Activated CD8-positive, alpha-beta T cell treated with anti-CD3 and anti-CD28 coated beads for 36 hours (primary cell): ENCODE measurements at regions of chr1 and their contacts with region 1.

Region 1: GRCh38 chr1:159071970-159072582 is 4.5 kb downstream of the AIM2 start:
- DNase-seq: no peak
- ATAC-seq: no peak
- H3K4me3 Mint-ChIP-seq: no peak overlapping the region
- H3K27ac Mint-ChIP-seq: no peak overlapping the region
- H3K4me1 Mint-ChIP-seq: peaks cover 28% of the 10 kb centered on the region
- H3K27me3 Mint-ChIP-seq: no peaks in the 10 kb centered on the region
- CTCF ChIP-seq: peak; percentile 89

Region 2: GRCh38 chr1:158793604-158794003 is 278.5 kb before region 1 on chr1:
- CTCF ChIA-PET with region 1: interaction called, 5 read pairs
- POLR2A ChIA-PET with region 1: no interaction called
- intact Hi-C with region 1: loop called (anchors 5 kb)
- DNase-seq: peak; percentile 41
- ATAC-seq: peak; percentile 56
- H3K4me3 Mint-ChIP-seq: no peak overlapping the region
- H3K27ac Mint-ChIP-seq: no peak overlapping the region
- H3K4me1 Mint-ChIP-seq: no peaks in the 10 kb centered on the region
- H3K27me3 Mint-ChIP-seq: peaks cover 4% of the 10 kb centered on the region
- CTCF ChIP-seq: peak; percentile 35

Region 3: GRCh38 chr1:159056069-159056698 is 15.9 kb before region 1 on chr1:
- CTCF ChIA-PET with region 1: interaction called, 10 read pairs
- POLR2A ChIA-PET with region 1: no interaction called
- intact Hi-C with region 1: no loop called
- DNase-seq: no peak
- ATAC-seq: no peak
- H3K4me3 Mint-ChIP-seq: no peak overlapping the region
- H3K27ac Mint-ChIP-seq: no peak overlapping the region
- H3K4me1 Mint-ChIP-seq: peaks cover 19% of the 10 kb centered on the region
- H3K27me3 Mint-ChIP-seq: no peaks in the 10 kb centered on the region
- CTCF ChIP-seq: no peak

Region 4: DNA sequence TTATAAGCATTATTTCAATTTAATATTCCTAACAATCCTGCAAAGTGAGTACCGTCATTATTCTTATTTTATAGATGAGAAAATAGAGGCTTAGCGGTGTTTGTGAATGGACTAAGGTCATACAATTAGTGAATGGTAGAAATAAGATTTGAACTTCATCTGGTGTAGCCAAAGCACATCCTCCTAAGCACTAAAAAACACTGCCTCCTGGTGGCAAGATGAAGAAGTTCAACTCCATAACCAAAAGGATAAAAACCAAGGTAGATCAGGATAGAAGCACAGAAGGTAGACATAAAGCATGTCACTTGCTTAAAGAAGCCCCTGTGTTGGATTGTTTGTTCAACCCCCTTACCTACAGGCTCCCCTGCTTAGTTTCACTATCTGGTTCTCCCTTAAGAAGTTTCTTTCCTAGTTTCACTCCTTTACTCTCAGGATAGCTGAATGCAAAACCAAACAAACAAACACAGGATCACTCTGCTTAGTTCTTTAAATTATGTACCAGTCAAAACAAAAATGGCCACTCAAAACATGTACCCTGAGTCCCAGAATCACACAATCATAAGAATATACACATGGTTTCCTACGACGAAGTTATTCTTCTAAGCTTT is 17.2 kb after region 1 on chr1:
- CTCF ChIA-PET with region 1: interaction called, 46 read pairs
- POLR2A ChIA-PET with region 1: interaction called, 12 read pairs
- intact Hi-C with region 1: no loop called
- DNase-seq: no peak
- ATAC-seq: peak; percentile 25
- H3K4me3 Mint-ChIP-seq: no peak overlapping the region
- H3K27ac Mint-ChIP-seq: peak overlapping the region; percentile 64
- H3K4me1 Mint-ChIP-seq: peaks cover 44% of the 10 kb centered on the region
- H3K27me3 Mint-ChIP-seq: no peaks in the 10 kb centered on the region
- CTCF ChIP-seq: peak; percentile 83